ENCODE measurements at regions of chr20 and their contacts with region 1.

Region 1: GRCh38 chr20:23995905-23996666 is 7.5 kb upstream of the GGTLC1 start:
- DNase-seq: peak; percentile 30 to 41 (median 40)
- H3K4me3 ChIP-seq: no peak overlapping the region
- H3K4me3 Mint-ChIP-seq: no peak overlapping the region
- H3K27ac ChIP-seq: no peak overlapping the region
- H3K27ac Mint-ChIP-seq: no peak overlapping the region
- H3K4me1 ChIP-seq: no peaks in the 10 kb centered on the region
- H3K4me1 Mint-ChIP-seq: no peaks in the 10 kb centered on the region
- H3K27me3 ChIP-seq: no peaks in the 10 kb centered on the region
- H3K27me3 Mint-ChIP-seq: peaks cover 2 to 5% (median 4%) of the 10 kb centered on the region in 3 donors
- CTCF ChIP-seq: peak; percentile 82

Region 2: GRCh38 chr20:23668477-23668951 is 327.6 kb before region 1 on chr20:
- intact Hi-C with region 1: loop called in 1 of 2 experiments (anchors 5 kb)
- DNase-seq: peak; percentile 52 to 66 (median 63)
- H3K4me3 ChIP-seq: no peak overlapping the region
- H3K4me3 Mint-ChIP-seq: no peak overlapping the region
- H3K27ac ChIP-seq: no peak overlapping the region
- H3K27ac Mint-ChIP-seq: no peak overlapping the region
- H3K4me1 ChIP-seq: peaks cover 4 to 5% of the 10 kb centered on the region in 2 donors
- H3K4me1 Mint-ChIP-seq: peaks cover 6% of the 10 kb centered on the region
- H3K27me3 ChIP-seq: no peaks in the 10 kb centered on the region
- H3K27me3 Mint-ChIP-seq: peaks cover 0 to 2% (median 2%) of the 10 kb centered on the region in 3 donors
- CTCF ChIP-seq: peak; percentile 90

Region 3: DNA sequence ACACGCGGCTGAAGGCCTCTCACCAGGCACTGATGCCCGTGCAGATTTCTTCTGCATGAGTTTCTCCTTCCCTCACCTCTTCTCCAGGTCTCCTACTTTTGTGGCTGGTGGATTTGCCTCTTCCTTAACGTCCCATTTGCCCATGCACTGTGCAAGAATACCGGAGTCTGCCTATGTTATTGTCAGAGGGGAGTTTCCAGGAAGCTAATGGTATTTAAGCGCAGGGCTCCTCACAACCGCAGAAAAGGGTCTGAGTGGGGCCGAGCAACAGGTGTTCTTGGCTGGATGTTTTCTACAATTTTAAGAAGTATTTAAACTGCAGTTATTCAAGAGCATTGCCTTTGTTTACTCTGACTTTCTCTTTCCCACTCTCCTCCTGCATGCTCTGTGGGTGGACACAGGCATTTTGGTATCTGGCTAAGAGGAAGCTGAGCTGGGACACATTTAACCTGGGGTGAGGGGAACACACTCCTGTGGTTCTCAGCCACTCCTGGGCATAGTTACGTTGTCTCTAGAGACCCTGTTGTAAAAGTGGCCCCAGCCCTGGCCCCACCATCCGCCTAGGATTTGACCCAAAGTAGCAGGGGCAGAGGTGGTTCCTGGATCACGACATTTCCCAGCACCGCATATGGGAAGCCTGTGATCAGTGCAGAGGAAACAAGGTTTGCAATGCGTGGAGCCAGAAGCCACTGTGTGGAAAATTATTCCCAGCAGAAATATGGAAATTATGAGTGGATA is 41.9 kb before region 1 on chr20:
- intact Hi-C with region 1: no loop called
- DNase-seq: no peak
- H3K4me3 ChIP-seq: no peak overlapping the region
- H3K4me3 Mint-ChIP-seq: no peak overlapping the region
- H3K27ac ChIP-seq: no peak overlapping the region
- H3K27ac Mint-ChIP-seq: no peak overlapping the region
- H3K4me1 ChIP-seq: no peaks in the 10 kb centered on the region
- H3K4me1 Mint-ChIP-seq: no peaks in the 10 kb centered on the region
- H3K27me3 ChIP-seq: no peaks in the 10 kb centered on the region
- H3K27me3 Mint-ChIP-seq: peaks cover 0 to 2% (median 0%) of the 10 kb centered on the region in 3 donors
- CTCF ChIP-seq: no peak

Region 4: DNA sequence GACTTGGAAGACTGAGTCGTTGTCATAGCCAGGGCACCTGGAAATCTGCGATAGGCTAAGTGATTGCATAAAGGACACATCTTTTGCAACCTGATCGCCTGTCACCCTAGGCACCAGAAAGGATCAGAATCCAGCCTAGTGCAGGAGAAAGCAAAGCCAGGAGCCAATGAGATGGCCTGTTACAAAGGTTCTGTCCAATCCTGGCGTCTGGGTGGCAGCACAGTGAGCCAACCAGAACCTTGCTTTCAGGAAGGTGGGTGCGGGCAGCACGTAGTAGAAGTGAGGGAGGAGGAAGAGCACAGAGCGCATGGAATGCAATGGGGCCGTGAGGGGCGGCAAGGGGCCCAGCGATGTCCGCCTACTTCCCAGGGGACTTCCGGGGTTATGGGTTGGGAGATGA is 112.9 kb after region 1 on chr20:
- intact Hi-C with region 1: no loop called
- DNase-seq: no peak
- H3K4me3 ChIP-seq: no peak overlapping the region
- H3K4me3 Mint-ChIP-seq: no peak overlapping the region
- H3K27ac ChIP-seq: no peak overlapping the region
- H3K27ac Mint-ChIP-seq: no peak overlapping the region
- H3K4me1 ChIP-seq: no peaks in the 10 kb centered on the region
- H3K4me1 Mint-ChIP-seq: no peaks in the 10 kb centered on the region
- H3K27me3 ChIP-seq: no peaks in the 10 kb centered on the region
- H3K27me3 Mint-ChIP-seq: peaks cover 0 to 9% (median 3%) of the 10 kb centered on the region in 3 donors
- CTCF ChIP-seq: no peak

Region 5: DNA sequence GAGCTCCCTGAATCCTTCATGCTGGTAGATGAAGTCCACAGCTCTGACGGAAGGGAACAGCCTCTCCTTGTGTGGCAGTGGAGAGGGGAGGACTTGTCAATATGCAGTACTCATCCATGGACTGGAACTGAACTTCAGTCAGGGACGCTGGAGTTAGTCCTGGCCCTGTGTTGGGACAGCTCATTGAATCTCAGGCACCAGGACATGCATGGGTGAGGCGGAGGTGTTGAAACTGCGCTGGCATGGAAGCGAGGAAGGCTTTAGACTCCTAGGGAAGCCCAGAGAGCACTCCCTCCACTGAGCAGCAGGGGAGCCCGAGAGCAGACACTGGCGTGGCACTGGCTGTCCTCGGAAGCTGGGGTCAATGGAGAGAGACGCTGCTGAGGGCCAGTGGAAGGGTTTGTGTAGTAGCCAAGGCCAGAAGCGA is 153.8 kb after region 1 on chr20:
- intact Hi-C with region 1: no loop called
- DNase-seq: no peak
- H3K4me3 ChIP-seq: no peak overlapping the region
- H3K4me3 Mint-ChIP-seq: peak overlapping the region in 1 of 2 donors; percentile 28
- H3K27ac ChIP-seq: no peak overlapping the region
- H3K27ac Mint-ChIP-seq: no peak overlapping the region
- H3K4me1 ChIP-seq: peaks cover 9 to 12% of the 10 kb centered on the region in 2 donors
- H3K4me1 Mint-ChIP-seq: peaks cover 18% of the 10 kb centered on the region
- H3K27me3 ChIP-seq: no peaks in the 10 kb centered on the region
- H3K27me3 Mint-ChIP-seq: peaks cover 0 to 3% (median 2%) of the 10 kb centered on the region in 3 donors
- CTCF ChIP-seq: peak; percentile 50

Region 6: GRCh38 chr20:24389686-24390085 is 393.6 kb after region 1 on chr20:
- intact Hi-C with region 1: no loop called
- DNase-seq: peak; percentile 52 to 66 (median 57)
- H3K4me3 ChIP-seq: peak overlapping the region in 1 of 3 experiments; percentile 48
- H3K4me3 Mint-ChIP-seq: peak overlapping the region in 1 of 2 donors; percentile 83
- H3K27ac ChIP-seq: peak overlapping the region in 1 of 2 donors; percentile 46
- H3K27ac Mint-ChIP-seq: peak overlapping the region in 3 of 7 donors; percentile 63 to 76 (median 70)
- H3K4me1 ChIP-seq: peaks cover 20% of the 10 kb centered on the region in 2 donors
- H3K4me1 Mint-ChIP-seq: peaks cover 26% of the 10 kb centered on the region
- H3K27me3 ChIP-seq: no peaks in the 10 kb centered on the region
- H3K27me3 Mint-ChIP-seq: peaks cover 0 to 7% (median 4%) of the 10 kb centered on the region in 3 donors
- CTCF ChIP-seq: no peak

Measured in CD14-positive monocyte (primary cell).